Panc1 (cell line): ENCODE measurements at regions of chr17 and their contacts with region 1.

Region 1: GRCh38 chr17:8965394-8966168 is at the start of gene PIK3R5:
- DNase-seq: no peak
- ATAC-seq: peak; percentile 45; the same call in 1 of the 2 replicates
- H3K4me3 ChIP-seq: no peak within 1 kb of the TSS
- H3K27ac ChIP-seq: no peak within 1 kb of the TSS
- H3K4me1 ChIP-seq: no peaks in the 10 kb centered on the region
- H3K27me3 ChIP-seq: no peaks in the 10 kb centered on the region; the same call in 1 of the 2 replicates
- CTCF ChIP-seq: no peak
- total RNA-seq, gene PIK3R5: 0.15 TPM

Region 2: GRCh38 chr17:8455665-8456209 is 509.8 kb before region 1 on chr17:
- CTCF ChIA-PET with region 1: no interaction called
- POLR2A ChIA-PET with region 1: no interaction called
- in situ Hi-C with region 1: no loop called
- intact Hi-C with region 1: no loop called
- DNase-seq: no peak
- ATAC-seq: no peak
- H3K4me3 ChIP-seq: no peak overlapping the region
- H3K27ac ChIP-seq: no peak overlapping the region
- H3K4me1 ChIP-seq: no peaks in the 10 kb centered on the region
- H3K27me3 ChIP-seq: no peaks in the 10 kb centered on the region
- CTCF ChIP-seq: no peak

Region 3: GRCh38 chr17:8986290-8986689 is 20.7 kb after region 1 on chr17:
- CTCF ChIA-PET with region 1: interaction called, 12 read pairs
- POLR2A ChIA-PET with region 1: no interaction called
- in situ Hi-C with region 1: no loop called
- intact Hi-C with region 1: no loop called
- DNase-seq: no peak
- ATAC-seq: no peak
- H3K4me3 ChIP-seq: no peak overlapping the region
- H3K27ac ChIP-seq: no peak overlapping the region
- H3K4me1 ChIP-seq: no peaks in the 10 kb centered on the region
- H3K27me3 ChIP-seq: no peaks in the 10 kb centered on the region
- CTCF ChIP-seq: peak; percentile 34; the same call in 1 of the 2 replicates